ENCODE measurements at regions of chr19 and their contacts with region 1.

Region 1: DNA sequence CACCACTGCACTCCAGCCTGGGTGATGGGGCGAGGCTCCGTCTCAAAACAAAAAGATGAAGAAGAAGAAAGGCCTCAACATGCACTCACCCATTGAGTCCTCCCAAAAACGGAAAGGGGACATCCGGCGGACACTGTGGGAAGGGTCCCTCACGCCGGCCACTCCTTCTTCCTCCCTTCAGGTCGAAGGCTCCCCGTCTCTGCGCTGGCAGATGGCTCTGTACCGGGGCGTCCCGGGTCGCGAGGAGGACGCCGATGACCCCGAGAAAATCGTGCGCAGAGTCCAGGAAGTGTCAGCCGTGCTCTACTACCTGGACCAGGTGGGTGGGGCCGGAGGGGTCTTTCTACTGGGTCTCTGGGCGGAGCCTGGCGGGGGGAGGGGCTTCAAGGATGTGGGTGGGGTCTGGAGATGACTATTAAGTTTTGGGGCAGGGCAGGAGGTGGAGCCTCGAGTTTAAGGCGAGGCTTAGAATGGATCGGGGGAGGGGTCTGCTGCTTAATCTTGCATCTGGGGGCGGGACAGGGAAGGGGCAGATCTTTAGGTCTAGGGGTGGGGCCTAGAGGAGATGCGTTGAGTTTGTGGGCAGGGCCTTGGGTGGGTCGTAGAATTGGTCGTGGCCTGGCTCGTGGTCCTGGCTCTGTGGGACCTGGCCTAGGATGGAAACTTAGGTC is 90.2 kb downstream of the MAP4K1 start:
- DNase-seq: no peak
- ATAC-seq: no peak

Region 2: DNA sequence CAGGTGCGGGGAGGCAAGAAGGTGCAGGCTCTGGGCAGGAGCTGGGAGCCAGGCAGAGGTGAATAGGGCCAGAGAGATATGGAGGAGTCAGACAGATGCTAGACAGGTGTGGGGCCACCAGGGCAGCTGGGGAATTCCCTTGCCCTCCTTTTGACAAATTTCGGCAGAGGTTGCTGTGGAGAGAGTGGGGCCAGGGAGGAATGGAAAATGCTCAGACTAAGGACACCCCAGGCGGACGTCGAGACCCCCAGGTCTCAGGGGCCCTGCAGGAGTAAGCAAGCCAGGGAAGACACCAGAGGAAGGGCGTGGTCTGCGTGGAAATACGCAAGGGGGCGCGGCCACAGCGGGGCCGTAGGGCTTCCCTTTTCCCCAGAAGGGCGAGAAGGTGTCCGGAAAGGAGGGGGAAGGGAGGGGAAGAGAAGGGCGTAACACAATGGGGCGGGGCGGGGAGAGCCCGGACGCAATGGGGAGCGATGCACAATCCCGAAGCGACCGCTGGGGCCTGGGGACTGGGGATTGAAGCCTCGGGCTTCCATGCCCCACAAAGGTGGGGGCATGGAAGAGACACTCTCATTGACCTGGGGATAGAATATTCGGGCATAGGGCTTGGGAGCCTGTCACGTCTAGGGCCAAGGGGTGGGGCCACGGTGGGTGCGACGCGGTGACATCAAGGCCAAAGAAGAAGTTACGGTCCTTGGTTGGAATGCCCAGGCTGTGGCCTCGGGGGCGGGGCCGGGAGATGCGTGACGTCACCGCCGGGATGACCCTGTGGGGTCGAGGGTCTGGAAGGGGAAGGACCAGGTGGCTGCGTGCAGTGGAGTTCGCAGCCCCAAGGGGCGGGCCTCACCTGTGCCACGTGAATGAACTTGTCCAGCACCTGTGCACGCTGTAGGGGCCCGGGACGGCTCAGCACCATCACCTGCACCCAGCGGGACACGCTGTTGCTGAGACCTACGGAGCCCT is 109.8 kb before region 1 on chr19:
- intact Hi-C with region 1: loop called (anchors 10 kb)
- DNase-seq: peak; percentile 72
- ATAC-seq: peak; percentile 72

Region 3: GRCh38 chr19:38619361-38620174 is 92.0 kb after region 1 on chr19:
- intact Hi-C with region 1: loop called (anchors 10 kb)
- DNase-seq: no peak
- ATAC-seq: no peak